ENCODE measurements at regions of chr5 and their contacts with region 1.

Region 1: DNA sequence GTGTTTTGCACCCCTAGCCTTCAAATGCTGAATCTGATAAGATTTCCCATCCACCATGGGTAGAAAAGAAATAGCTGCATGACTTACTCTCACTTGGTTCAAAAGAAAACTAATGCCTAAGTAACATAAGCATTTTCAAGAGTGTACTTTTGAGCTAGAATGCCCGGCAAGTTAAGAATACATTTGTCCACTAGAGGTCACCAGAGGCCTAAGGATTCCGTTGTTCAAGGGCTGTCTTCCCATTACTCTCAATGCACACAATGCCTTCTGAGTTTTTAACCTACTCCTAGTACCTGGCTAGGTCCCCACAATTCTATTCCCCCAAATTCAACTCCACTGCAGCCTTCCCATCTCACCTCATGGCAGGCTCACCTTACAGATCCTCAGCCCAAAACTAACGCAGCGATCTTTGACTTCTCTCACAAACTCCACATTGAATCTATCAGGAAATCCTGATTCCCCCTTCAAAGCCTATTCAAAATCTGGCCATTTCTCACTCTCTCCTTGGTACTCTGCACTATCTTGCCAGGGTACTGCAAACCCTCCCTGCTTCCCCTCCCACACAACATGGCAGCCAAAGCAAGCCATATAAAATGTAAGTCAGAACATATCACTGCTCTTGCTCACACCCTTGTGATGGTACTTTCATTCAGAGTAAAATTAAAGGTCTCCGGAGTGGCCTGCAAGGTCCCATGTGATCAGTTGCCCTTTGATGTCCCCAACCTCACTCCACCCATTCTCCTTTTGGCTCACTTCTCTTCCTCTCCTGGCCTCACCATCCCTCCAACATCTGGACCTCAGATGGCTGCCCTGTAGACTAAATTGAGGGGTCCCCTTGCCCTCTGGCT is 13.4 kb downstream of the OXCT1 start:
- DNase-seq: no peak
- ATAC-seq: peak; percentile 75 to 94 (median 82)
- H3K4me3 ChIP-seq: no peak overlapping the region
- H3K27ac ChIP-seq: no peak overlapping the region
- H3K4me1 ChIP-seq: no peaks in the 10 kb centered on the region
- H3K27me3 ChIP-seq: no peaks in the 10 kb centered on the region
- CTCF ChIP-seq: peak; percentile 85

Region 2: DNA sequence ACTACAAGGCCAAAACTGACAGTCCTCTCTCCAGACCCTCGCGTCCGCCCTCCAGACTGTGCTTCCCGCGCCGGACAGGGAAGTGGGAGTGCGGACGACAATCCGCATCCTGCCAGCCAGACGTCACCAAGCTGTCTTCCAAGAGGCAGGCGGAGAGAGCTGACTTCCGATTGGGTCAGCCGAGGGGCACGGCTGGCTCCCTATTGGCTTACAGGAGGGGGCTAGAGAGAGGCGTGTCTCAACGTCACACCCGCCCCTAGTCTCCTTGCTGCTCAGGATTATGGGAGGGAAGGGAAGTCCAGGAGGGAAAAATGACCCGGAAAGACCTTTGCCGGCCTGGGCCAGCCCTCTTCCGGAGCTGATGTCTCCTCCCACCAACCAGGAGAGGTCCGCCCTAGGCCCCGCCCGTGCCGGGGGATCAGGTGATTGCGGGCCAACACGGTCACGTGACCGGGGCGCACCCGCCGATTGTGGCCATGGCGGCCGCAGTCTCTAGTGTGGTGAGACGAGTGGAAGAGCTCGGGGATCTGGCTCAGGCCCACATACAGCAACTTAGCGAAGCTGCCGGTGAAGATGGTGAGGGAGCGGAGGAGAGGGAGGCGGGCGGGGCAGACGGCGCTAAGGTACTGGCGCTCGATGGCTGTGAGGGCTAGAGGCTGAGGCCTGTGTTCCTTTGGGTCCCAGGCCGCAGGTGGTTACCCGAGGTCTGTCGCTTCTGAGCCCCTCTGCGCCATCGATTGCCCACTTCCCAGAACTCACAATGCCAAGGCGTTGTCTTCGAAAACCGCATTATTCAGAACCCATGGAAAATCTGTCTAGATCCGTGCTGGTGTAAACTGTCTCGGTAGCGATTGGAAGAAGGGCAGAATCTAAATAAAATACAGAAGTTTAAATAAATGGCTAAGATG is 47.3 kb after region 1 on chr5 and contains the start of gene RIMOC1:
- intact Hi-C with region 1: loop called in 1 of 2 experiments (anchors 5 kb)
- DNase-seq: peak; percentile 98 to 99
- ATAC-seq: peak; percentile 98 to 99 (median 99)
- H3K4me3 ChIP-seq: peak within 1 kb of the TSS; percentile 87
- H3K27ac ChIP-seq: peak within 1 kb of the TSS; percentile 95
- H3K4me1 ChIP-seq: peaks cover 42% of the 10 kb centered on the region
- H3K27me3 ChIP-seq: no peaks in the 10 kb centered on the region
- CTCF ChIP-seq: no peak
- total RNA-seq, gene RIMOC1: 5.9 to 9.7 (median 8.6) TPM

Region 3: GRCh38 chr5:41924872-41925554 is 68.1 kb after region 1 on chr5 and contains the start of gene FBXO4:
- intact Hi-C with region 1: loop called in 1 of 2 experiments (anchors 5 kb)
- DNase-seq: peak; percentile 89 to 94
- ATAC-seq: peak; percentile 97 to 99 (median 99)
- H3K4me3 ChIP-seq: peak within 1 kb of the TSS; percentile 80
- H3K27ac ChIP-seq: peak within 1 kb of the TSS; percentile 93
- H3K4me1 ChIP-seq: peaks cover 16% of the 10 kb centered on the region
- H3K27me3 ChIP-seq: no peaks in the 10 kb centered on the region
- CTCF ChIP-seq: peak; percentile 59
- total RNA-seq, gene FBXO4: 2.6 to 4.3 (median 3.1) TPM

Region 4: DNA sequence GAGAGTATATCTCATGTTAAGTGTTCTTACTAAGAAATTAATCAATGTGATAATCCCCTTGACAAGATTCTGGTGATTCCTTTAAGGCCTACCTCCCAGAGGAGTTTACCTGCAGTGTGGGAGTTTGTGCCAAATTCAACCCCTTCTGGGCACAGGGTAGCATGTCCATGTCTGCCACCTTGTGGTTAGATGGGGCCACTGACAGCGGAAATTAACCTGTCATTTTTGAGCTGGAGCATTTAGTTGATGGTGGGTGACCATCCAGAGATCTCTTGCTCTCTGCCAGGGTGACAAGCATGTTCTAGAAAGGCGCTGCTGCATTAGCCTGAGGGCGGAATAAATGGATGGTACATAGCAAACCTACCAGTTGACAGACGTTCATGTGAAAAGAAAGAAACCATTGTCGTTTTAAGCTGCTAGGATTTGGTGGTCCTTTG is 200.4 kb after region 1 on chr5:
- intact Hi-C with region 1: loop called (anchors 2 to 5 kb)
- DNase-seq: no peak
- ATAC-seq: peak in 3 of 4 donors; percentile 39 to 62 (median 50)
- H3K4me3 ChIP-seq: no peak overlapping the region
- H3K27ac ChIP-seq: no peak overlapping the region
- H3K4me1 ChIP-seq: no peaks in the 10 kb centered on the region
- H3K27me3 ChIP-seq: no peaks in the 10 kb centered on the region
- CTCF ChIP-seq: peak; percentile 60

Region 5: DNA sequence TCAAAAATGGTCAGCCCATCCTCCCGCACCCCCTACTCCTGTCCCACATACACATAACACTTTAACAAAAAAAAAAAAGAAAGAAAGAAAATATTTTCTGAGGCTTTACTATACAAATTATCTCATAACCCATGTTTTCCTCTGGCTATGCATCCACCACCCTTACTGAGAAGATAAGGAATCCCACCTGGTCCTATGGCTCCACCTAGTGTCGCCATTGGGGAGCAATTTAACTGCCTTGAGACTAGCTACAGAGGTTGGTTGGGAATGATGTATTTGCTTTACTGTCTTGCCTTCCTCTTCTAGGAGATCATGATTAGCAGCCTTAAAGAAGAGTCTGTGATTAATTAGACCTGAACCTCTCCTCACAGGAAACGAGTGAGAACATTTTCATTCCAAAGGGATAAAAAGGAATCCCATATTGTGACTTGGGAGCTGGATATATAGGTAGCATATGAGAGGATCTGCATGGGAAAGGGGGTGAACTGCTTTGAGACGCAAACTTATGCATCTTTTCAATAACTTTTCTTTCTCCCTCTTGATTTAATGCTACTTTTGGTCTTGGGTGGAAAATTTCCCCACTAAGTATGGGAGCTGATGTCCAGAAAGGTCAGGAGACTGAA is 1032.6 kb after region 1 on chr5:
- intact Hi-C with region 1: loop called (anchors 2 to 5 kb)
- DNase-seq: peak; percentile 68 to 77
- ATAC-seq: peak; percentile 86 to 99 (median 94)
- H3K4me3 ChIP-seq: no peak overlapping the region
- H3K27ac ChIP-seq: no peak overlapping the region
- H3K4me1 ChIP-seq: no peaks in the 10 kb centered on the region
- H3K27me3 ChIP-seq: no peaks in the 10 kb centered on the region
- CTCF ChIP-seq: peak; percentile 92